Activated CD4-positive, alpha-beta T cell treated with anti-CD3 and anti-CD28 coated beads, Interleukin-2, amount 10 ng/mL, durations not matched to agents 24 days and 14 days (primary cell): ENCODE measurements at regions of chr5 and their contacts with region 1.

Region 1: DNA sequence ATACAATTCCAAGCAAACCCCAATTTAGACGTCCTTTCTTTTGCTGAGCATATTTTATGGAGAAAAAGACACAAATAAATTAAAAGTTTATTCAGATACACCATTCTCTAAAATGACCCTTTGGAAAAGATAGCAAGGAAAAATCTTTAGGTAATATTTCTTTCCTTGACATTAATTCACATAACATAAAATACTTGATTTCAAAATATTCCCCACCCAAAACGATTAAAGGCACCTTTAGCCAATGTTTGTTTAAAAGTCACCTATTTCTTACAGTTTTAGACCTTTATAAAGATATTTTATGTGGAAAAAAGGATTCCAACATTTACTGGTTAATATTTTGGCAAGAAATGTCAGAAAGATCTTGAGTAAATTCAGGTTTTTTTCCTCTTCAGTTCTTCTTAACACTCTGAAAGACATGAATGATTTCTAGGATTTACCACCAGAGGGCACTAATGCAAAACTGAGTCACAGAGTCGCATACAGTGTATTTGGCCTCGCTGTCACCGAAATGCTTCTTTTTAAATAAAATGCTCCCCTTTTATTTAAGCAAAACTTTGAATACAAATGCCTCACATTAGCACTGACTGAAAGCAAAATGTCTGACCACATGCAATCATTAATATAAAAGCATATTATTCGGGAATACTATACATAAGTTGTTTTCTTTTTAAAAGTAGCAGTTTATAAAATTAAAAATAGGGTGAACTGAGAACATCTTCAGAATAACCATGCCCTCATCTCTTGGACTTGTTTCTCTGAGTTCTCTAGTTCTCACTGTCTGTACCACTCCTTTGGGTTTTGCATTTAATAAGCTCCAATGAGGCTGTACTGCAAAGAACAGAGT is 122.5 kb downstream of the SLC1A3 start:
- DNase-seq: peak; percentile 74
- H3K4me3 Mint-ChIP-seq: no peak overlapping the region
- H3K27ac Mint-ChIP-seq: no peak overlapping the region
- H3K4me1 Mint-ChIP-seq: peaks cover 14% of the 10 kb centered on the region
- H3K27me3 Mint-ChIP-seq: peaks cover 4% of the 10 kb centered on the region

Region 2: DNA sequence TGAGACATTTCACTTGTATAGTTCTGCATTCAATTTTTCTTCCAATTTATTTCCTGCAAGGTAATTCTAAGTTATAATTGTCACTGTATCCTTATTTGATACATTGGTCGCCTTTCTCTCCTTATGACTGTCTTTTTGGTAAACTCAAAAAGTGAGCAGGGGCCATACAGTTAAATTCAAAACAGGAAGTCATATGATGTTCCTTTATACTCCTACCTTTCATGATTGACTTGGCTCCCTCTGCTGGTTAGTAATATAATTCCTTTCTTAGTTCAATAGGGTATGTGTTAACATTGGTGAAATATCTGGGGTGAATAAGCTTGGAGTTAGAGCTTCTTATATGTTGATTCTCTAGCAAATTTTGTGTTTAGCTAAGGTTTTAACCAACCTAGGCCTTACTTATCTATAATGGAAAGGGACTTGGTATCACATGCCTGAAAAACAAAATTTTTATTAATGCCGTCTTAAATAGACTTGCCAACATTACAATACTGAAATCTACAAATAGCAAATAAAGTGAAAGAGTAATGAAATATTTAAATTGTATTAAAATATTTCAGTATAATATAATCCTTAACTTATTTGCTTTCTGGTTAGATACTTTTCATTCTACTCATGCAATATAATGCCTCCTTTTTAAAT is 141.6 kb after region 1 on chr5:
- intact Hi-C with region 1: loop called (anchors 1 kb)
- DNase-seq: peak; percentile 70
- H3K4me3 Mint-ChIP-seq: no peak overlapping the region
- H3K27ac Mint-ChIP-seq: no peak overlapping the region
- H3K4me1 Mint-ChIP-seq: peaks cover 24% of the 10 kb centered on the region
- H3K27me3 Mint-ChIP-seq: no peaks in the 10 kb centered on the region